Activated CD4-positive, alpha-beta T cell treated with anti-CD3 and anti-CD28 coated beads, Interleukin-2, amount 10 ng/mL, durations not matched to agents 24 days and 14 days (primary cell): ENCODE measurements at regions of chr2 and their contacts with region 1.

Region 1: DNA sequence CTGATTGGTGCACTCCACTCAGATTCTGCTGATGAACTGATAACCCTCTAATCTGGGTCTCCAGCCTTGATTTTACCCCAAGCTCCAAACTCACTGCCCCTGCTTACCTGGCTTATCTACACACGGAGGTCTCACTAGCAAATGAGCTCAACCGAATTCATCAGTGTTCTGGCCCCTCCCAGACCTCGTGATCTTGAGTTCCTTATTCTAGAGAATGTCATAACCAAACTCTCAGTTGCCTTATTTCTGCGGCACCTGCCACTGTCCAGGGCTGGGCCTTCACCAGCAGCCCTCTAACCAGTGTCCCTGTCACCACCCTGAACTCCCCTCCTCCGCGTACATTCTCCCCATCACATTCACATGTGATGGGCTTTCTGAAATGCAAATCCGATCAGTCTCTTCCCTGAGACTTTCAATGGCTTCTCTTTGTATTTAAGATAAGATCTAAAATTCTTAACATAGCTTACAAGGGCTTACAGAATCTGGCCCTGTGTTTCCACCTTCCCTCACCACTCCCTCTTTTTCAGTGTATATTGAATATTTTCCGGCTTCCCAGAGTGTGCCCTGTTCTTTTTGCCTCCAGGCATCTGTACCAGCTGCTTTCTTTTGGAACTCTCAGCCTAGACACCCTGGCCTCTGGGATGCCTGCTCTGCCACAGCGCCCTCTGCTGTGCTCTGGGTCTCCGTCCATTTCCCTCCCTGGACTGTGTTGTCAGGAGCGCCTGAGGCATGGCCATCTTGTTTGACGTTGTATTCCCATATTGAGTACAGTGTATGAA is 31.1 kb downstream of the NAB1 start:
- DNase-seq: peak; percentile 86
- H3K4me3 Mint-ChIP-seq: peak overlapping the region; percentile 49
- H3K27ac Mint-ChIP-seq: peak overlapping the region; percentile 91
- H3K4me1 Mint-ChIP-seq: peaks cover 48% of the 10 kb centered on the region
- H3K27me3 Mint-ChIP-seq: no peaks in the 10 kb centered on the region

Region 2: GRCh38 chr2:190408538-190409271 is 271.3 kb before region 1 on chr2:
- intact Hi-C with region 1: loop called (anchors 1 kb)
- DNase-seq: peak; percentile 91
- H3K4me3 Mint-ChIP-seq: peak overlapping the region; percentile 87
- H3K27ac Mint-ChIP-seq: peak overlapping the region; percentile 94
- H3K4me1 Mint-ChIP-seq: peaks cover 41% of the 10 kb centered on the region
- H3K27me3 Mint-ChIP-seq: no peaks in the 10 kb centered on the region

Region 3: GRCh38 chr2:190486037-190486623 is 193.9 kb before region 1 on chr2:
- intact Hi-C with region 1: no loop called
- DNase-seq: no peak
- H3K4me3 Mint-ChIP-seq: no peak overlapping the region
- H3K27ac Mint-ChIP-seq: no peak overlapping the region
- H3K4me1 Mint-ChIP-seq: peaks cover 12% of the 10 kb centered on the region
- H3K27me3 Mint-ChIP-seq: no peaks in the 10 kb centered on the region

Region 4: DNA sequence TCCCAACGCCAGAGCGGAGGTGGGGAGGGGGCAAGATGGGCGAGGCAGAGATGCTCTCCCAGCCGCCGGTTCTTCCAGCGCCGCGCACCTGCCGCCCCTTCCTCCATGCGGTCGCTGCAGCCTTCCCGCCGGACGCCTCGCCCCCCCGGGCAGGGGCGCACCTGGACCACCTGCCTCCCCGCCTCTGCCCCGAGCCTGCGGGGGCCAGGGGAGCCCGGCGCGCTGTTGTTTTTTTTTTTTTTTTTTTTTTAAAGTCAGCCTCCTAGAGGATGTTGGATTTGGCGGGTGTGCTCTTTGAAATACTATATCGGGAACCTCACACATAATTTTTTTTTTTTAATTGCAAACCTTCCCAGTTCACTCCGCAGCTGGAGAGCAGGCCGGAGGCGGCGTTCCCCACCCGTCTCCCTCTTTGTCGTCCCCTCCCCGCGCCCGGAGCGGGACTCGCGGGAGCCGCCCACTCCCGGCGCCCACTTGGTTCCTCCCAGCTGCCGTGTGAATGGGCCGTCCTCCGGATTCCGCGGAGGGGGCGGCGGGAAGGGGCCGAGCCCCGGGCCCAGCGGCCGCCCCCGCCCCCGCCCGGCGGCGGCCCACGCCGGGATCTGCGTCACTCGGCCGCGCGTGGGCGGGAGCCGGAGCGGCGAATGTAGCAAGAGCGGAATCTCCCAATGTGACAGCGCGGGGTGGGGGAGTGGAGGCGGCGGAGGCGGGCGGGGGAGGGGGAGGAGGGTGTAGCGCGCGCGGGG is 31.5 kb before region 1 on chr2:
- intact Hi-C with region 1: loop called (anchors 1 kb)
- DNase-seq: peak; percentile 96
- H3K4me3 Mint-ChIP-seq: peak overlapping the region; percentile 72
- H3K27ac Mint-ChIP-seq: peak overlapping the region; percentile 82
- H3K4me1 Mint-ChIP-seq: peaks cover 36% of the 10 kb centered on the region
- H3K27me3 Mint-ChIP-seq: no peaks in the 10 kb centered on the region

Region 5: GRCh38 chr2:190695739-190696138 is 15.7 kb after region 1 on chr2:
- intact Hi-C with region 1: loop called (anchors 1 kb)
- DNase-seq: peak; percentile 55
- H3K4me3 Mint-ChIP-seq: no peak overlapping the region
- H3K27ac Mint-ChIP-seq: peak overlapping the region; percentile 64
- H3K4me1 Mint-ChIP-seq: peaks cover 18% of the 10 kb centered on the region
- H3K27me3 Mint-ChIP-seq: no peaks in the 10 kb centered on the region

Region 6: GRCh38 chr2:190791347-190791975 is 111.5 kb after region 1 on chr2:
- intact Hi-C with region 1: loop called (anchors 2 kb)
- DNase-seq: no peak
- H3K4me3 Mint-ChIP-seq: peak overlapping the region; percentile 53
- H3K27ac Mint-ChIP-seq: peak overlapping the region; percentile 86
- H3K4me1 Mint-ChIP-seq: peaks cover 66% of the 10 kb centered on the region
- H3K27me3 Mint-ChIP-seq: no peaks in the 10 kb centered on the region

Region 7: DNA sequence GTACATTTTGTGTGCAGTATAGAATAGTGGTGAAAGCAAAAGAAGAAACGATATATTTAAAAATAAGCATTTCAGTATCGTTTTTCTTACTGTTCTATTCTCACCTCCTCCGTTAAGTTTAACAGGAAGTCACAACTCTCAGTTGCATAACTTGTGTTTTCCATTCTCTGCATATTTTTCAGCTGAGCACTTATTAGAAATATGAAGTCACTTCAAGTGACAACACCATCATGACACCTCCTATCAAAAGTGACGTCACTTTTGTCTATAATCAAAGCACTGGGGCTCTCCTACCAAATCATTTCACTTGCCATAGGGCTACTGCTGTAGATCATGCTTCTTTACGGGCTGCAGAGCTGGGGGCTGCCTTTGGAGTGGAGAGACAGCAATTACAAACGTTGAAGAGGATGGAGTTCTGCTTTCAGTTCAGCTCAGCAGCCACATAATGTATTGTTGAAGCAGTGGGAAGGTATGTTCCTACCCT is 434.4 kb after region 1 on chr2:
- intact Hi-C with region 1: loop called (anchors 10 kb)
- DNase-seq: peak; percentile 82
- H3K4me3 Mint-ChIP-seq: peak overlapping the region; percentile 60
- H3K27ac Mint-ChIP-seq: peak overlapping the region; percentile 92
- H3K4me1 Mint-ChIP-seq: peaks cover 55% of the 10 kb centered on the region
- H3K27me3 Mint-ChIP-seq: no peaks in the 10 kb centered on the region

Region 8: GRCh38 chr2:192035731-192036442 is 1355.9 kb after region 1 on chr2:
- intact Hi-C with region 1: no loop called
- DNase-seq: no peak
- H3K4me3 Mint-ChIP-seq: no peak overlapping the region
- H3K27ac Mint-ChIP-seq: no peak overlapping the region
- H3K4me1 Mint-ChIP-seq: no peaks in the 10 kb centered on the region
- H3K27me3 Mint-ChIP-seq: peaks cover 5% of the 10 kb centered on the region